ENCODE measurements at regions of chr4 and their contacts with region 1.

Region 1: GRCh38 chr4:17688011-17688441 is 73.6 kb downstream of the MED28 start:
- DNase-seq: no peak
- ATAC-seq: no peak
- H3K4me3 ChIP-seq: no peak overlapping the region
- H3K27ac ChIP-seq: no peak overlapping the region
- H3K4me1 ChIP-seq: no peaks in the 10 kb centered on the region
- H3K27me3 ChIP-seq: no peaks in the 10 kb centered on the region
- CTCF ChIP-seq: no peak

Region 2: GRCh38 chr4:17619416-17620105 is 68.5 kb before region 1 on chr4:
- CTCF ChIA-PET with region 1: no interaction called
- POLR2A ChIA-PET with region 1: no interaction called
- in situ Hi-C with region 1: no loop called
- intact Hi-C with region 1: no loop called
- DNase-seq: no peak
- ATAC-seq: no peak
- H3K4me3 ChIP-seq: no peak overlapping the region
- H3K27ac ChIP-seq: no peak overlapping the region
- H3K4me1 ChIP-seq: no peaks in the 10 kb centered on the region
- H3K27me3 ChIP-seq: no peaks in the 10 kb centered on the region
- CTCF ChIP-seq: no peak

Region 3: DNA sequence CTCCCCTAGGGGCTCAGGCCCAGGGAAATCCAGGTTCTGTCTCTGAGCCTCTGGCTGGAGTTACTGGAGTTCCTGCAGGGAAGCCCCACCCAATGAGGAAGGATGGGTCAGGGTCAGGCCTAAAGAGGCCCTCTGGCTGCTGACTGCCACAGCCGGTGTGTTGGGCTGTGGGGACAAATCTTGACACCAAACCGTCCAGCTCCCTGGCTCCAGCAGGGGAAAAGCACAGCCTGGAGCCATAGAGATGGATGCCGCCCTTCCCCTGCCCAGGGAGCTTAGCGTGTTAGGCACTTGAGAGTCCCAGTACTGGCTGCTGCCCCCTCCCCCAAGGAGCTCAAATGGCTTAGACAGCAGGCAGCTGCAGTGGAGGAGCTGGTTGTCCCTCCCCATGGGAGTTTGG is 654.8 kb after region 1 on chr4:
- CTCF ChIA-PET with region 1: no interaction called
- POLR2A ChIA-PET with region 1: no interaction called
- in situ Hi-C with region 1: no loop called
- intact Hi-C with region 1: no loop called
- DNase-seq: no peak
- ATAC-seq: no peak
- H3K4me3 ChIP-seq: no peak overlapping the region
- H3K27ac ChIP-seq: no peak overlapping the region
- H3K4me1 ChIP-seq: no peaks in the 10 kb centered on the region
- H3K27me3 ChIP-seq: no peaks in the 10 kb centered on the region
- CTCF ChIP-seq: no peak

Region 4: GRCh38 chr4:18894928-18895327 is 1206.9 kb after region 1 on chr4:
- CTCF ChIA-PET with region 1: no interaction called
- POLR2A ChIA-PET with region 1: interaction called, 12 read pairs
- in situ Hi-C with region 1: no loop called
- intact Hi-C with region 1: no loop called
- DNase-seq: no peak
- ATAC-seq: no peak
- H3K4me3 ChIP-seq: no peak overlapping the region
- H3K27ac ChIP-seq: no peak overlapping the region
- H3K4me1 ChIP-seq: no peaks in the 10 kb centered on the region
- H3K27me3 ChIP-seq: no peaks in the 10 kb centered on the region
- CTCF ChIP-seq: no peak

Measured in Panc1 (cell line).